ENCODE measurements at regions of chr16 and their contacts with region 1.

Region 1: DNA sequence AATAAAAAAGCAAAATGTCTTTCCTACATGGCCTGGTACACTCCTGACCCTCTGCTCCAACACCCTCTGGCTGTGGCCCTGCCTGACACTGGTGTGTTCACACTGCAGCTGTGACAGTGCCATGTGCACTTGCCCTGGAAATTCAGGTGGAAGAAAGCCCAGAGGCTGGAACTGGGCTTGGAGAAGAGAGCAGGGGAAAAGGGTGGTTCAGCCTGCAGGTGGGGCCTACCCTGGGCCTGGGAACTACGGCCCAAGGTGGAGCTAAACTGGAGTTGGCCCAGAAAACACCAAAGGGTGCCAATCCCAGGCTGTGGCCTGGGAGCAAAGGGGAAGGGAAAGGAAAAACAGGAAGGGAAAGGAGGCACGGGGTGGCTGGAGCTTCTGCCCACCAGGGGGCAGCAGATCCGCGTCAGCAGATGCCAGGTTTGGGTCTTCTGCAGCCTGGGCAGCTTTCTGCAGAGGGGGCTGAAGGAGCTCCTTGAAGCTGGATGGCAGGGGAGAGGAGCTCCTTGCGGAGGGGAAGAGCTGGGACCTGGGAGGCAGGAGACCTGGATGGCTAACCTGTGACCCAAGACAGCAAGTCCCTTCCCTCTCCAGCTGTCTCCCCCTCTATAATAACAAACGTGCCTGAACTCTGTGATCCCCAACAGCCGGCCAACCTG is 15.4 kb upstream of the CTCF start:
- DNase-seq: peak; percentile 86
- ATAC-seq: peak; percentile 63
- H3K4me3 Mint-ChIP-seq: no peak overlapping the region
- H3K27ac Mint-ChIP-seq: peak overlapping the region; percentile 89
- H3K4me1 Mint-ChIP-seq: peaks cover 35% of the 10 kb centered on the region
- H3K27me3 Mint-ChIP-seq: no peaks in the 10 kb centered on the region

Region 2: GRCh38 chr16:67428146-67428731 is 118.7 kb before region 1 on chr16:
- CTCF ChIA-PET with region 1: no interaction called
- POLR2A ChIA-PET with region 1: no interaction called
- intact Hi-C with region 1: no loop called
- DNase-seq: peak; percentile 81
- ATAC-seq: peak; percentile 78
- H3K4me3 Mint-ChIP-seq: no peak overlapping the region
- H3K27ac Mint-ChIP-seq: no peak overlapping the region
- H3K4me1 Mint-ChIP-seq: peaks cover 12% of the 10 kb centered on the region
- H3K27me3 Mint-ChIP-seq: peaks cover 39% of the 10 kb centered on the region

Region 3: GRCh38 chr16:67530013-67530939 is 16.6 kb before region 1 on chr16:
- CTCF ChIA-PET with region 1: interaction called, 29 read pairs
- POLR2A ChIA-PET with region 1: no interaction called
- intact Hi-C with region 1: no loop called
- DNase-seq: peak; percentile 40
- ATAC-seq: peak; percentile 27
- H3K4me3 Mint-ChIP-seq: peak overlapping the region; percentile 64
- H3K27ac Mint-ChIP-seq: peak overlapping the region; percentile 58
- H3K4me1 Mint-ChIP-seq: peaks cover 7% of the 10 kb centered on the region
- H3K27me3 Mint-ChIP-seq: peaks cover 16% of the 10 kb centered on the region

Region 4: DNA sequence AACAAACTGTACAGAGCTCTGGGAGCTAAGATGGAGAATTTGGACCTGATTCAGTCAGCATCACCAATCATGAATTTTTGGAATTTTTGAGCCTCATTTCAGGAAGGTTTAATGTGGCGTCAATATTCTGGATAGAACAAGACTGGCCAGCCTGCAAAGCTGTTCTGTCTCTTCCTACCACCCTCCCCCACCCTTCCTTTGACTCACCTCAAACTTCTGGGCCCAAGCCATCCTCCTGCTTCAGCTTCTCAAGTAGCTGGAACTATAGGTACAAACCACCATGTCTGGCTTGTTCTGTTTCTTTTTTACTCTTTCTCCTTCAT is 48.1 kb after region 1 on chr16:
- CTCF ChIA-PET with region 1: interaction called, 12 read pairs
- POLR2A ChIA-PET with region 1: no interaction called
- intact Hi-C with region 1: no loop called
- DNase-seq: peak; percentile 44
- ATAC-seq: peak; percentile 81
- H3K4me3 Mint-ChIP-seq: no peak overlapping the region
- H3K27ac Mint-ChIP-seq: peak overlapping the region; percentile 53
- H3K4me1 Mint-ChIP-seq: peaks cover 36% of the 10 kb centered on the region
- H3K27me3 Mint-ChIP-seq: no peaks in the 10 kb centered on the region

Region 5: DNA sequence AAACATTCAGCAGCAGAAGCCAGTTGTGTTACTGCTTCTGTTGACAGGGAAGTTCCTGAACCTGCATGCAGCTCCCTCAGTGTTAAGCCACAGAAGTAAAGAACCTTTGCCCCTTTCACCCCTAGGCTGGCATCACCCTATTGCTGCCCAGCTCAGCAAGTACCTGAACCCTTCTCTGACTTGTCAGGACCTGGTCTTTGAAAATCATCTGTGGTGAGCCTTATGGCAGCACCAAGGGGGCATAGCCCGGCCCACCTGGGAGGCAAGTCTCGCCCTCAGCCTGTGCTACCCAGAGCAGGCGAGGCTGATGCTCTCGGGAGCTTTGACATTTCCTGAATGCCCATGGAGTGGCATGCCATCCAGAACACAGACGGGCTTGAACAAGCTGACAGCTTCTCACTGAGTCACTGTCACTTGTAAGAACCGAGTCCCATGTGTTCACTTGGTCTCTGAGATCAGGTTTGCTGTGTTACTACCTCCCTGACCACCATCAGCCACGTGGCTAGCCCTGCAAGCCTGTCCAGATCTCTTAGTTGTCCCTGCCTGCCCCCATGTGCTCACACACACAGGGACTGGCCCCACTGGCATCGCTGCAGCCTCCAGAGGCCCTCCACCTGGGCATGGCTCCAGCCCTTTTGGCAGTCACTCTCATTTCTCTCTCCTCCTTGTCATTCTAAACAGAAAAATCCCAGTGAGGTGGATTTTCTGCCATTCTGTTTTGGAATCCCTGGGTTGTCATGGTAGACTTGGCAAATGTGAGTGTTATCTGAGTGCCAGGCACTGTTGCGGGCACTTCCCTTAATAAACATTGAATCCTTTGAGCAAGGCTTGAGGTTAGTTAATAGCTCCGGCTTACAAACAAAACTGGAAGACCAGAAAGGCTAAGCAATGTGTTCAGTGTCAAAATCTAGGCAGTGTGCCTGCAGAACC is 95.2 kb after region 1 on chr16:
- CTCF ChIA-PET with region 1: interaction called, 86 read pairs
- POLR2A ChIA-PET with region 1: interaction called, 3 read pairs
- intact Hi-C with region 1: loop called (anchors 1 kb)
- DNase-seq: no peak
- ATAC-seq: no peak
- H3K4me3 Mint-ChIP-seq: no peak overlapping the region
- H3K27ac Mint-ChIP-seq: no peak overlapping the region
- H3K4me1 Mint-ChIP-seq: peaks cover 12% of the 10 kb centered on the region
- H3K27me3 Mint-ChIP-seq: no peaks in the 10 kb centered on the region

Region 6: GRCh38 chr16:67652578-67653127 is 105.8 kb after region 1 on chr16:
- CTCF ChIA-PET with region 1: interaction called, 12 read pairs
- POLR2A ChIA-PET with region 1: no interaction called
- intact Hi-C with region 1: no loop called
- DNase-seq: no peak
- ATAC-seq: no peak
- H3K4me3 Mint-ChIP-seq: no peak overlapping the region
- H3K27ac Mint-ChIP-seq: no peak overlapping the region
- H3K4me1 Mint-ChIP-seq: peaks cover 2% of the 10 kb centered on the region
- H3K27me3 Mint-ChIP-seq: no peaks in the 10 kb centered on the region

Region 7: GRCh38 chr16:67667817-67668494 is 121.1 kb after region 1 on chr16:
- CTCF ChIA-PET with region 1: interaction called, 23 read pairs
- POLR2A ChIA-PET with region 1: no interaction called
- intact Hi-C with region 1: loop called (anchors 2 to 5 kb)
- DNase-seq: peak; percentile 92
- ATAC-seq: peak; percentile 91
- H3K4me3 Mint-ChIP-seq: no peak overlapping the region
- H3K27ac Mint-ChIP-seq: no peak overlapping the region
- H3K4me1 Mint-ChIP-seq: peaks cover 19% of the 10 kb centered on the region
- H3K27me3 Mint-ChIP-seq: no peaks in the 10 kb centered on the region

Measured in activated CD4-positive, alpha-beta T cell treated with anti-CD3 and anti-CD28 coated beads for 36 hours (primary cell).